PC-9 (cell line): ENCODE measurements at regions of chr7 and their contacts with region 1.

Region 1: DNA sequence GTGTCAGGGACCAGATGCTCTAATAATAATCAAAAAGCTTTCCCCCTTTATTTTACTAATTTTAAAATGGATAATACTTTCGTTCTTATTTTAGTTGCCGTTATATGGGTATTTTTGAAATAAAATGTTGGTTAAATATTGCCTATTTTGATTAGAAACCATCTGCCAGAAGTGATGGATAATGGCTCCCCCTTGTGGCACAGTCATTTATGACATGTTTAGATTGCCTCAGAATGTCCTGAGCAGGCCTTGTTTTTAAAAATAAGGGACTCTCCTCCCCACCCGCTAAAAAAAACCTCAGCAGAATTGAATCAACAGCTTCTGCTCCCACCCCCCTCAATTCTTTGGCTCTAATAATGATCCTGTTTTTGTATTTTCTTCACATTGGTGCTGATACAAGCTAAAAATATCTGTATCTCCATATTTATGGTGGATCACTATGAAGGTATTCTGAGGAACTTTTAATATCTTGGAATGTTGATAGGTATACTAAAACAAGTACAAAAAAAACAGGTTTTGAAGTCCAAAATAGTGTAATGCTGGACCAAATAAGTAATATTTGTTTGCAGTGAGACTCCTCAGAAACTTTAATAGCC is 38.8 kb downstream of the TMEM60 start:
- DNase-seq: peak; percentile 40 to 55
- H3K4me3 ChIP-seq: no peak overlapping the region
- H3K27ac ChIP-seq: no peak overlapping the region; the same call in 1 of the 2 replicates
- H3K4me1 ChIP-seq: 0 out of 2 replicates have a peak, but pooled peaks cover 3% of the 10 kb centered on the region
- H3K27me3 ChIP-seq: no peaks in the 10 kb centered on the region
- CTCF ChIP-seq: peak; percentile 92

Region 2: GRCh38 chr7:77696198-77697028 is 63.0 kb before region 1 on chr7 and contains the start of gene RSBN1L:
- CTCF ChIA-PET with region 1: interaction called, 3 read pairs
- POLR2A ChIA-PET with region 1: interaction called, 14 read pairs
- intact Hi-C with region 1: no loop called
- DNase-seq: peak; percentile 90 to 99
- H3K4me3 ChIP-seq: peak within 1 kb of the TSS; percentile 89
- H3K27ac ChIP-seq: peak within 1 kb of the TSS; percentile 51
- H3K4me1 ChIP-seq: peaks cover 32% of the 10 kb centered on the region
- H3K27me3 ChIP-seq: no peaks in the 10 kb centered on the region
- CTCF ChIP-seq: no peak
- total RNA-seq, gene RSBN1L: 13.3 and 20.7 TPM in 2 replicates